Caco-2 (cell line): ENCODE measurements at regions of chr12 and their contacts with region 1.

Region 1: GRCh38 chr12:104456417-104456949 is at the start of gene CHST11:
- DNase-seq: peak; percentile 48 to 66
- H3K4me3 ChIP-seq: peak within 1 kb of the TSS; percentile 37
- H3K4me3 Mint-ChIP-seq: peak within 1 kb of the TSS; percentile 96
- H3K27ac Mint-ChIP-seq: peak within 1 kb of the TSS; percentile 71
- H3K4me1 ChIP-seq: peaks cover 4% of the 10 kb centered on the region; the same call in 1 of the 2 replicates
- H3K4me1 Mint-ChIP-seq: no peaks in the 10 kb centered on the region
- H3K27me3 ChIP-seq: no peaks in the 10 kb centered on the region
- H3K27me3 Mint-ChIP-seq: peaks cover 23% of the 10 kb centered on the region
- CTCF ChIP-seq: no peak
- total RNA-seq, gene CHST11: 0.25 and 0.97 TPM in 2 replicates

Region 2: GRCh38 chr12:104049903-104050356 is 406.6 kb before region 1 on chr12 and contains the start of gene GLT8D2:
- CTCF ChIA-PET with region 1: no interaction called
- POLR2A ChIA-PET with region 1: no interaction called
- intact Hi-C with region 1: loop called (anchors 5 kb)
- DNase-seq: peak in 1 of 2 experiments; percentile 15
- H3K4me3 ChIP-seq: peak within 1 kb of the TSS; percentile 19
- H3K4me3 Mint-ChIP-seq: peak within 1 kb of the TSS; percentile 64
- H3K27ac Mint-ChIP-seq: no peak within 1 kb of the TSS
- H3K4me1 ChIP-seq: no peaks in the 10 kb centered on the region
- H3K4me1 Mint-ChIP-seq: no peaks in the 10 kb centered on the region
- H3K27me3 ChIP-seq: no peaks in the 10 kb centered on the region
- H3K27me3 Mint-ChIP-seq: peaks cover 8% of the 10 kb centered on the region
- CTCF ChIP-seq: no peak
- total RNA-seq, gene GLT8D2: 0.49 TPM in 1 of 2 replicates, not detected in the other

Region 3: GRCh38 chr12:104381731-104382480 is 74.6 kb before region 1 on chr12:
- CTCF ChIA-PET with region 1: interaction called, 8 read pairs
- POLR2A ChIA-PET with region 1: no interaction called
- intact Hi-C with region 1: loop called (anchors 5 kb)
- DNase-seq: peak; percentile 74 to 81
- H3K4me3 ChIP-seq: no peak overlapping the region
- H3K4me3 Mint-ChIP-seq: no peak overlapping the region
- H3K27ac Mint-ChIP-seq: no peak overlapping the region
- H3K4me1 ChIP-seq: no peaks in the 10 kb centered on the region
- H3K4me1 Mint-ChIP-seq: peaks cover 6% of the 10 kb centered on the region
- H3K27me3 ChIP-seq: no peaks in the 10 kb centered on the region
- H3K27me3 Mint-ChIP-seq: peaks cover 5% of the 10 kb centered on the region
- CTCF ChIP-seq: peak; percentile 89 to 94

Region 4: DNA sequence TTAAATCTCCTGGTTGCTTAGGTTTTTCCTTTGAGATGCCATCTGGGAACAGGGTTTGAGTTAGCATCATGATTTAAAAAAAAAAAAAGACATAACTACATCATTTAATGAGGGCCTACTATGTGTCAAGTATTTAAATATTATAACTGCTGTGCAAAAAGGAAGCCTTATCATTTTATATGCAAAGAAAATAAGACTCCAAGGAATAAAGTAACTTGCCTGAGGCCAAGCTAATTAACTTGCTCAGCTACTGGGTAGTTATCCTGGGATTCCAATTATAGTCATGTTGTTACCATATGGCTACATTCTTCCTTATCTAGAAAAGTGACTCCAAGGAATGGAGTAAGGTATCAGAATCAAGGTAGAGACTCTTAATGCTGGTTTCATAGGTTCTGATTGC is 378.1 kb after region 1 on chr12:
- CTCF ChIA-PET with region 1: no interaction called
- POLR2A ChIA-PET with region 1: no interaction called
- intact Hi-C with region 1: no loop called
- DNase-seq: no peak
- H3K4me3 ChIP-seq: no peak overlapping the region
- H3K4me3 Mint-ChIP-seq: no peak overlapping the region
- H3K27ac Mint-ChIP-seq: no peak overlapping the region
- H3K4me1 ChIP-seq: no peaks in the 10 kb centered on the region
- H3K4me1 Mint-ChIP-seq: no peaks in the 10 kb centered on the region
- H3K27me3 ChIP-seq: no peaks in the 10 kb centered on the region
- H3K27me3 Mint-ChIP-seq: no peaks in the 10 kb centered on the region
- CTCF ChIP-seq: no peak